Activated CD4-positive, alpha-beta T cell treated with anti-CD3 and anti-CD28 coated beads, Interleukin-2, amount 10 ng/mL, durations not matched to agents 24 days and 14 days (primary cell): ENCODE measurements at regions of chr20 and their contacts with region 1.

Region 1: GRCh38 chr20:8213831-8214587 is 81.9 kb downstream of the PLCB1 start:
- DNase-seq: peak; percentile 71
- H3K4me3 Mint-ChIP-seq: peak overlapping the region; percentile 77
- H3K27ac Mint-ChIP-seq: peak overlapping the region; percentile 64
- H3K4me1 Mint-ChIP-seq: peaks cover 43% of the 10 kb centered on the region
- H3K27me3 Mint-ChIP-seq: peaks cover 2% of the 10 kb centered on the region

Region 2: GRCh38 chr20:7911586-7912330 is 302.3 kb before region 1 on chr20:
- intact Hi-C with region 1: no loop called
- DNase-seq: no peak
- H3K4me3 Mint-ChIP-seq: no peak overlapping the region
- H3K27ac Mint-ChIP-seq: no peak overlapping the region
- H3K4me1 Mint-ChIP-seq: no peaks in the 10 kb centered on the region
- H3K27me3 Mint-ChIP-seq: no peaks in the 10 kb centered on the region

Region 3: DNA sequence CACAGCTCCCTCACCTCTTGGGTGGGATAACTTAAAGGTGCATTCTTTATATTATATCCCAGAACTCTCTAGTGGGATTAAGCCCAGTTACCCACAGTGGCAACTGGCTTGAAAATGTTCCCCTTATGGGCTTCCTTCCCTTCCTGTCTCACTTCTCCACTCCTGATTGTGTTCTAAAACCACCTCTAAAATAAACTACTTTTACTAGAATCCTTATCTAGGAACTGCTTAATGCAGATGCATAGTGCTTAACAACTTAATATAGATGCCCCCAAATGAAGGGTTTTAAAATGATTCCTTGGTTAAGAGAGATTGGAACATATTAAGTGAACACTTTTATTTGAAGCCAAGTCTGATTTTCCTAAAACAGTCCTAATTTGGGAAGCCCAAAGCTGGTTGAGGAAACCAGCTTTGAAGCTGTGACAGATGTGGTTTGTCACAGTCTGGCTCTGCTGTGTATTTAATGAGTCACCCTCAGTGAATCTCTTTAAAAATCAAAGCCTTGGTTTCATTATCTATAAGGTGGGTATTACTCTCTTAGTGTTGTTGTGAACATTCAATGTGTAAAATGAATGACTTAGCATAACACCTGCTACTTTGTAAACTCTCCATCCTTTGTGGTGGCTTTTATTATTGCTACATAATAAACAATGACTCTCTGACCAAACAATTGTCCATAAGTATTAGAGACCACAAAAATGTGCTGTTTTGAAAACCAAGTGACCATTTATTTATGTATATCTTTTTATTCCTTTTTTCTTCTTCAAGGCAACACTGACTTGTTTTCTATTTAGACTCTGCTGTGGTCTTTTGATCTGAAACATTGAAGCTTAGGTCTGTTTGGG is 57.6 kb before region 1 on chr20:
- intact Hi-C with region 1: loop called (anchors 1 kb)
- DNase-seq: no peak
- H3K4me3 Mint-ChIP-seq: no peak overlapping the region
- H3K27ac Mint-ChIP-seq: no peak overlapping the region
- H3K4me1 Mint-ChIP-seq: peaks cover 16% of the 10 kb centered on the region
- H3K27me3 Mint-ChIP-seq: peaks cover 3% of the 10 kb centered on the region

Region 4: DNA sequence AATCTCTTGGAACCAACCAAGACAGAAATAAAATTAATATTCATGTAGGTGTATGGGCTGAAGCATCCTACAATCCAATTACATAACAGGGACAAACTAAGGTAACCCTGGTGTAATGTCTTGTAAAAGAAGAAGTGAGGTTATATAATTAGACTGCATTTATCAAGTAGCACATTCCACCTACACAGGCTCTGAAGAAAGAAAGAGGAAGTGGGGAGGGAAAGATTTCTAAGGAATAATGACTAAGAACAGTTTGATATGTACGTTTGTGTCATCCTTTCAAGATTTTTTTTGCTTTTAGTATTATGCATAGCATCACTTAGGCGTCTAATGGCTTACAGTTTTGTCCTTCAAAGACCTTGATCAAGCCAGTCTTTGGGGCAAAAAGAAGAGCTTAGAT is 57.7 kb after region 1 on chr20:
- intact Hi-C with region 1: loop called (anchors 10 kb)
- DNase-seq: no peak
- H3K4me3 Mint-ChIP-seq: no peak overlapping the region
- H3K27ac Mint-ChIP-seq: no peak overlapping the region
- H3K4me1 Mint-ChIP-seq: peaks cover 3% of the 10 kb centered on the region
- H3K27me3 Mint-ChIP-seq: peaks cover 9% of the 10 kb centered on the region

Region 5: GRCh38 chr20:8399947-8400346 is 185.9 kb after region 1 on chr20:
- intact Hi-C with region 1: loop called (anchors 5 kb)
- DNase-seq: peak; percentile 55
- H3K4me3 Mint-ChIP-seq: no peak overlapping the region
- H3K27ac Mint-ChIP-seq: no peak overlapping the region
- H3K4me1 Mint-ChIP-seq: peaks cover 7% of the 10 kb centered on the region
- H3K27me3 Mint-ChIP-seq: peaks cover 3% of the 10 kb centered on the region